ENCODE measurements at regions of chr1 and their contacts with region 1.

Region 1: GRCh38 chr1:204544321-204544720 is 28.1 kb downstream of the MDM4 start:
- DNase-seq: no peak
- H3K4me3 ChIP-seq: no peak overlapping the region
- H3K27ac ChIP-seq: no peak overlapping the region
- H3K4me1 ChIP-seq: no peaks in the 10 kb centered on the region
- CTCF ChIP-seq: no peak

Region 2: GRCh38 chr1:204530932-204531331 is 13.4 kb before region 1 on chr1:
- CTCF ChIA-PET with region 1: no interaction called
- POLR2A ChIA-PET with region 1: interaction called, 9 read pairs
- intact Hi-C with region 1: loop called (anchors 1 kb)
- DNase-seq: no peak
- H3K4me3 ChIP-seq: no peak overlapping the region
- H3K27ac ChIP-seq: peak overlapping the region; percentile 71
- H3K4me1 ChIP-seq: peaks cover 55% of the 10 kb centered on the region
- CTCF ChIP-seq: no peak